Esophagus squamous epithelium (tissue), 5 donors: ENCODE measurements at regions of chr19 and their contacts with region 1.

Region 1: GRCh38 chr19:16771618-16772017 is 52.0 kb downstream of the NWD1 start:
- DNase-seq: no peak
- H3K4me3 ChIP-seq: no peak overlapping the region
- H3K27ac ChIP-seq: no peak overlapping the region
- H3K4me1 ChIP-seq: no peaks in the 10 kb centered on the region
- H3K27me3 ChIP-seq: no peaks in the 10 kb centered on the region
- CTCF ChIP-seq: peak; percentile 72 to 87 (median 84)
- POLR2A ChIP-seq: no peak

Region 2: GRCh38 chr19:16645140-16645539 is 126.5 kb before region 1 on chr19:
- intact Hi-C with region 1: no loop called
- DNase-seq: no peak
- H3K4me3 ChIP-seq: no peak overlapping the region
- H3K27ac ChIP-seq: no peak overlapping the region
- H3K4me1 ChIP-seq: peaks cover 0 to 11% (median 7%) of the 10 kb centered on the region in 3 donors
- H3K27me3 ChIP-seq: no peaks in the 10 kb centered on the region
- CTCF ChIP-seq: no peak
- POLR2A ChIP-seq: no peak

Region 3: DNA sequence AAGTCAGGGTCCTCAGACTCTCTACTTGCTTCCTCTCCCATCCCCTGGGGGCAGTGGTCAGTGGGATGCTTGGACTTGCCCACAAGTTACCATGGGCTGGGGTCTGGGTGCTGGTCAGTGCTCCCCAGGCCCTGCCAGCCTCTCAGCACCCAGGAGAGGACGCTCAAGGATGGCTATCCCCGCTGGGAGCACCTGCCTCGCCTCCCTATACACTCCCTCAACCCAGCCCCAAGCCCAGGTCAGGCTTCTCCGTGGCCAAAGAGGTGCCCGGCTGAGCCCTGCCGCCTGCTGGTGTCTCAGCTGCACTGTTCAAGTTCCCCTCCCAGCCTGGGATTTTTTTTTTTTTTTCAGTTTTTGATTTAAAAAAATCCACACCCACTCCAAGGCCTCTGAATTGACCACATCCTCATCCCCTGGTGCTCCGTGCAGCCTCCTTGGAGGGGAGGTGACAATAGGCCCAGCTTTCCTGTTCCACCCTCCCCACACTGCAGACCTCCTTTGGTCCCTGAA is 128.0 kb after region 1 on chr19:
- intact Hi-C with region 1: loop called (anchors 10 kb)
- DNase-seq: no peak
- H3K4me3 ChIP-seq: no peak overlapping the region
- H3K27ac ChIP-seq: no peak overlapping the region
- H3K4me1 ChIP-seq: peaks cover 3 to 29% (median 7%) of the 10 kb centered on the region in 3 donors
- H3K27me3 ChIP-seq: peaks cover 0 to 18% (median 0%) of the 10 kb centered on the region in 4 donors
- CTCF ChIP-seq: peak in 5 of 6 experiments; percentile 11 to 50 (median 38)
- POLR2A ChIP-seq: no peak

Region 4: DNA sequence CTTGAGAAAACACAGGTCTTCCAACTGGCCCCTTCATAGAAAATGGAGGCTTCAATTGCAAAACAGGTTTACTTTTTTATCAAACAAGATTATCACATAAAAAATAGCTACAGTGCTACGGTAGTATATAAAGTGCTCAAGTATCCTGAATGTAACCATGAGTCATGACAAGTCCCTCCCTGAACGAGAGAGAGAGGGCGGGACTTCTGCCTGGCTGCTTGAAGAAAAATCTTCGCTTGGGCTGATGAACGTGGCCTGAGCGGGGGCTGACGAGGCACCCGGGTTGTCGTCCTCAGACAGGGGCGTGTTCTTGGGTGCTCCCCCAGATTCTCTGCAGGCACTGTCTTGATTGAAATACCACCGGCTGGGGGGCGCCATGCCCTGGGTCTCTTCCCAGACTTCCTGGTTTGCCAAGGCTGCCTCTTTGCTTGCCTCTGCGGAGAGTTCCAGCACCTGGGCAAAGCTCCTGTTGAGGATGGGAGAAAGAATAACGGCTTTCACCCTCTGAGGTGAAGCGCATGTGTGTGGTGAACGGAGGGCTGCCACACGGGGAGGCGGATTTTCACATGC is 278.2 kb after region 1 on chr19:
- intact Hi-C with region 1: loop called (anchors 10 kb)
- DNase-seq: no peak
- H3K4me3 ChIP-seq: no peak overlapping the region
- H3K27ac ChIP-seq: no peak overlapping the region
- H3K4me1 ChIP-seq: no peaks in the 10 kb centered on the region
- H3K27me3 ChIP-seq: no peaks in the 10 kb centered on the region
- CTCF ChIP-seq: no peak
- POLR2A ChIP-seq: no peak